ENCODE measurements at regions of chr4 and their contacts with region 1.

Region 1: GRCh38 chr4:116202524-116202923 is 882.9 kb downstream of the TRAM1L1 start:
- DNase-seq: no peak
- ATAC-seq: no peak
- H3K4me3 ChIP-seq: no peak overlapping the region
- H3K27ac ChIP-seq: no peak overlapping the region
- H3K4me1 ChIP-seq: no peaks in the 10 kb centered on the region
- H3K27me3 ChIP-seq: no peaks in the 10 kb centered on the region
- CTCF ChIP-seq: no peak

Region 2: GRCh38 chr4:115489279-115489678 is 713.2 kb before region 1 on chr4:
- CTCF ChIA-PET with region 1: no interaction called
- POLR2A ChIA-PET with region 1: no interaction called
- intact Hi-C with region 1: no loop called
- DNase-seq: no peak
- ATAC-seq: no peak
- H3K4me3 ChIP-seq: no peak overlapping the region
- H3K27ac ChIP-seq: no peak overlapping the region
- H3K4me1 ChIP-seq: no peaks in the 10 kb centered on the region
- H3K27me3 ChIP-seq: no peaks in the 10 kb centered on the region
- CTCF ChIP-seq: no peak

Region 3: DNA sequence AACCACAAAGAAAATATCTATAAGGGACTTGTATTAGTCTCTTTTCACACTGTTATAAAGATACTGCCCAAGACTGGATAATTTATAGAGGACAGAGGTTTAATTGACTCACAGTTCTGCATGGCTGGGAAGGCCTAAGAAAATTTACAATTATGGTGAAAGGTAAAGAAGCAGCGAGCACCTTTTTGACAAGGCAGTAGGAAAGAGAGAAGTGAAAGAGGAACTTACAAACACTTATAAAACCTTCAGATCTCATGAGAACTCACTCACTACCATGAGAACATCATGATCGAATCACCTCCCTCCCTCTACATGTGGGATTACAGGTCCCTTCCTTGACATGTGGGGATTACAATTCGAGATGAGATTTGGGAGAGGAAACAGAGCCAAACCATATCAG is 26.9 kb after region 1 on chr4:
- CTCF ChIA-PET with region 1: no interaction called
- POLR2A ChIA-PET with region 1: interaction called, 17 read pairs
- intact Hi-C with region 1: no loop called
- DNase-seq: no peak
- ATAC-seq: no peak
- H3K4me3 ChIP-seq: no peak overlapping the region
- H3K27ac ChIP-seq: no peak overlapping the region
- H3K4me1 ChIP-seq: no peaks in the 10 kb centered on the region
- H3K27me3 ChIP-seq: no peaks in the 10 kb centered on the region
- CTCF ChIP-seq: no peak

Measured in PC-3 (cell line).